WTC11 (cell line): ENCODE measurements at regions of chr6 and their contacts with region 1.

Region 1: DNA sequence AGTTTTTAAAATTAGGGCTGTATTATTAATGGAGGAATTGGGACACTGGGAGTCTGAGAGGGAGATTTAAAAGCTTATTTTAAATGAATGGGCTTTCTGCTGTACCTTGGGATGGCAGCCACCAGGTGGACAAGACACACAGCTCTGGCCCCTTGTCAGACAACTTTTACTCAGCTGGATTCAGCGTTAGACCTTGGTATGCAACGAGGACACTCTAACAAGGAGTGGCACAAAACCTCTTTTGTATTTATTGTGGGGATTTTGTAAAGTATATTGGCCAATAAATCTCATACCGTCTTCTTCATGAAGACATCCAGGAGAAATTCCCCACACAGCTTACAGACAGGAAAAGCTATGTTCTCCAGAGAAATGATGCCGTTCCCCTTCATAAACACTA is 105.7 kb downstream of the LCA5 start:
- DNase-seq: peak; percentile 34
- ATAC-seq: peak; percentile 85
- H3K4me3 Mint-ChIP-seq: no peak overlapping the region
- H3K27ac Mint-ChIP-seq: no peak overlapping the region
- H3K4me1 Mint-ChIP-seq: peaks cover 18% of the 10 kb centered on the region
- H3K27me3 Mint-ChIP-seq: peaks cover 24% of the 10 kb centered on the region
- CTCF ChIP-seq: no peak

Region 2: GRCh38 chr6:79117752-79118151 is 313.8 kb before region 1 on chr6:
- CTCF ChIA-PET with region 1: no interaction called
- POLR2A ChIA-PET with region 1: no interaction called
- DNase-seq: no peak
- ATAC-seq: no peak
- H3K4me3 Mint-ChIP-seq: no peak overlapping the region
- H3K27ac Mint-ChIP-seq: no peak overlapping the region
- H3K4me1 Mint-ChIP-seq: peaks cover 11% of the 10 kb centered on the region
- H3K27me3 Mint-ChIP-seq: no peaks in the 10 kb centered on the region
- CTCF ChIP-seq: no peak

Region 3: DNA sequence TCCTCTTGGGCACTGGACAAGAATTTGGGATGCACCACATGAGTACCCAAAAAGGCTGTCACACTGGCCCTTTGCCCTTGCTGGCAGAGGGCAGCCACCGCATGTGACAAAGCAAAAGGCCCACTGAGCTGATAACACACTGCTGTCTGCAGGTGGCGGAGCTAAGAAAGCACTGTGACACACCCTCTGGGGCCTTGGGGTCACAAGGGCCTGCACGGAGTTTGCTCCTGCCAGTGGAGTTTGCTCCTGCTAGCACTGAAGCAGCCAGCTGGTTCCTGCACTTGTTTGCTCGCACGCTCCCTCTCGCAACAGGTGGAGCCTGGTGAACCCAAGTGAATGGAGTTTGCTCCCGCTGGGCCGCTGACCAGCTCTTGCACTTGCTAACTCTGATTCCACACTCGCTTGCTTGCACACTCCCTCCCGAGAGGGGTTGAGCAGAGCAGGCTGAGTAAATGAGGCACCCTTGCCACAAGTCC is 26.8 kb before region 1 on chr6:
- CTCF ChIA-PET with region 1: interaction called, 15 read pairs
- POLR2A ChIA-PET with region 1: no interaction called
- DNase-seq: peak; percentile 17
- ATAC-seq: peak; percentile 61
- H3K4me3 Mint-ChIP-seq: no peak overlapping the region
- H3K27ac Mint-ChIP-seq: no peak overlapping the region
- H3K4me1 Mint-ChIP-seq: peaks cover 21% of the 10 kb centered on the region
- H3K27me3 Mint-ChIP-seq: no peaks in the 10 kb centered on the region
- CTCF ChIP-seq: no peak

Region 4: DNA sequence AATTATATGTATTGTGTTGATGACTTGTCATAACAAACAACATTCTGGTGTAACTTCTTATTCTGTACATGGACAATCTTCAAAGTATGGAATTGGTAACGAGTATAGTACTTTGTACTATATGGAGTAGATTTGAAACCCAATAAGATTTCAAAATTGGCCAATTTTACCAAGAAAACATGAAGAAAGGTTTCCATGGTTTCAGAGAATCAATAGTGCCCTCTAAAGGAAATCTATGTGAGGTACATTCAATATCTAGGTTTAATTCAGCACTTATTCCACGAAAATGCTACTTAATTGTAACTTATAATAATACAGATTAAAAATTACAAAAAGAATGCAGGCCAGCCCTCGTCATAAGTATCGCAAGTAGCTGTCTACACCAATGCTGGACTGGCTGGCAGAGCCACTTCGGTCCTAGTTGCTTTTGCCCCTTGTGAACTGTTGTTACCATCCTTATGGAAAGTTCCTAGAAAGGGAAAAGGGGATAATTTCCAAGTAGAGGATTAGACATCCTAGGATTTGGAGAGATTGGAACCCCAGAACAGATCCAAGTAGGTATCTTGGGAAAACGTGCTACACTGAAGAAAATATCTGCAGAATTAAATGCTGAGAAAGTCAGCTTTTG is 34.8 kb after region 1 on chr6:
- CTCF ChIA-PET with region 1: interaction called, 12 read pairs
- POLR2A ChIA-PET with region 1: no interaction called
- DNase-seq: no peak
- ATAC-seq: no peak
- H3K4me3 Mint-ChIP-seq: no peak overlapping the region
- H3K27ac Mint-ChIP-seq: no peak overlapping the region
- H3K4me1 Mint-ChIP-seq: peaks cover 20% of the 10 kb centered on the region
- H3K27me3 Mint-ChIP-seq: no peaks in the 10 kb centered on the region
- CTCF ChIP-seq: no peak; the same call in 1 of the 2 replicates

Region 5: GRCh38 chr6:79600812-79601609 is 169.5 kb after region 1 on chr6:
- CTCF ChIA-PET with region 1: no interaction called
- POLR2A ChIA-PET with region 1: no interaction called
- DNase-seq: no peak
- ATAC-seq: no peak
- H3K4me3 Mint-ChIP-seq: no peak overlapping the region
- H3K27ac Mint-ChIP-seq: no peak overlapping the region; the same call in 1 of the 2 replicates
- H3K4me1 Mint-ChIP-seq: no peaks in the 10 kb centered on the region
- H3K27me3 Mint-ChIP-seq: no peaks in the 10 kb centered on the region
- CTCF ChIP-seq: no peak

Region 6: GRCh38 chr6:79672631-79673111 is 241.1 kb after region 1 on chr6:
- CTCF ChIA-PET with region 1: interaction called, 10 read pairs
- POLR2A ChIA-PET with region 1: no interaction called
- DNase-seq: no peak
- ATAC-seq: peak; percentile 42; the same call in 1 of the 2 replicates
- H3K4me3 Mint-ChIP-seq: no peak overlapping the region
- H3K27ac Mint-ChIP-seq: 0 out of 2 replicates have a peak overlapping the region, but pooled peaks have one; percentile 2
- H3K4me1 Mint-ChIP-seq: peaks cover 27% of the 10 kb centered on the region
- H3K27me3 Mint-ChIP-seq: no peaks in the 10 kb centered on the region
- CTCF ChIP-seq: no peak

Region 7: GRCh38 chr6:79783670-79784382 is 352.3 kb after region 1 on chr6:
- CTCF ChIA-PET with region 1: no interaction called
- POLR2A ChIA-PET with region 1: no interaction called
- DNase-seq: no peak
- ATAC-seq: no peak
- H3K4me3 Mint-ChIP-seq: no peak overlapping the region
- H3K27ac Mint-ChIP-seq: no peak overlapping the region
- H3K4me1 Mint-ChIP-seq: no peaks in the 10 kb centered on the region
- H3K27me3 Mint-ChIP-seq: no peaks in the 10 kb centered on the region; the same call in 1 of the 2 replicates
- CTCF ChIP-seq: no peak